Calu3 (cell line): ENCODE measurements at regions of chr14 and their contacts with region 1.

Region 1: DNA sequence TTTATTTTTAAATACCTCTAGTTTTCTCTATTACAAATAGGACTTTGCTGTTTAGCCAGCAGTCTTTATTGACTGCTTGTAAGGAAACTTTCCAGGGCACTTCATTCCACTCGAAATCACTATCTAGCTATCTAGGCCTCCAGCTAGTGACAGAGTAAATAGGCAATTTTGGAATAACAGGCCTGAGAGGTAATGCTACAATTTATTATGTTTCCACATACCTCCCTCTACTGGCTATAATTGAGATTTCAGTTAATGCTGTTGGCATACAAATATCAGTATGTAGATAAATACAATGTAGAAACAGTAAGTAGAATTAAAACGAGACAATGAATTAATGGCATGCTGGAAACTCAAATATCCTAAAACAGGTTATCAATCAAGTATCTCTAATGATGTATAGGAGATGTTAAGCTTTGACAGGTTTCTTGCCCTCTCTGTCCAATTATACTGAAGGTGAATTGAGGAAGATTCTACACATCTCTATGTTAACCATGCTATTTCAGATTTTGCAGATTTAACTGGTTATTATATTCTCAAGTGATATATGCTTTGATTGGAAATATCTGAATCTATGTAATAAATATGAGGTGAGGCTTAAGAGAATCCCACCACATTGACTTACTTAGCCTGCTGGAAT is 7.2 kb downstream of the DTD2 start:
- DNase-seq: no peak
- H3K4me3 Mint-ChIP-seq: no peak overlapping the region
- H3K27ac Mint-ChIP-seq: no peak overlapping the region
- H3K4me1 Mint-ChIP-seq: peaks cover 8% of the 10 kb centered on the region
- H3K27me3 Mint-ChIP-seq: no peaks in the 10 kb centered on the region
- CTCF ChIP-seq: peak; percentile 28

Region 2: GRCh38 chr14:31419967-31420318 is 30.1 kb before region 1 on chr14:
- CTCF ChIA-PET with region 1: interaction called, 5 read pairs
- intact Hi-C with region 1: loop called (anchors 2 kb)
- DNase-seq: peak; percentile 78
- H3K4me3 Mint-ChIP-seq: peak overlapping the region; percentile 100
- H3K27ac Mint-ChIP-seq: peak overlapping the region; percentile 98
- H3K4me1 Mint-ChIP-seq: peaks cover 22% of the 10 kb centered on the region
- H3K27me3 Mint-ChIP-seq: no peaks in the 10 kb centered on the region
- CTCF ChIP-seq: no peak

Region 3: GRCh38 chr14:31435276-31435675 is 14.8 kb before region 1 on chr14:
- CTCF ChIA-PET with region 1: no interaction called
- intact Hi-C with region 1: no loop called
- DNase-seq: no peak
- H3K4me3 Mint-ChIP-seq: no peak overlapping the region
- H3K27ac Mint-ChIP-seq: no peak overlapping the region
- H3K4me1 Mint-ChIP-seq: no peaks in the 10 kb centered on the region
- H3K27me3 Mint-ChIP-seq: no peaks in the 10 kb centered on the region
- CTCF ChIP-seq: no peak

Region 4: DNA sequence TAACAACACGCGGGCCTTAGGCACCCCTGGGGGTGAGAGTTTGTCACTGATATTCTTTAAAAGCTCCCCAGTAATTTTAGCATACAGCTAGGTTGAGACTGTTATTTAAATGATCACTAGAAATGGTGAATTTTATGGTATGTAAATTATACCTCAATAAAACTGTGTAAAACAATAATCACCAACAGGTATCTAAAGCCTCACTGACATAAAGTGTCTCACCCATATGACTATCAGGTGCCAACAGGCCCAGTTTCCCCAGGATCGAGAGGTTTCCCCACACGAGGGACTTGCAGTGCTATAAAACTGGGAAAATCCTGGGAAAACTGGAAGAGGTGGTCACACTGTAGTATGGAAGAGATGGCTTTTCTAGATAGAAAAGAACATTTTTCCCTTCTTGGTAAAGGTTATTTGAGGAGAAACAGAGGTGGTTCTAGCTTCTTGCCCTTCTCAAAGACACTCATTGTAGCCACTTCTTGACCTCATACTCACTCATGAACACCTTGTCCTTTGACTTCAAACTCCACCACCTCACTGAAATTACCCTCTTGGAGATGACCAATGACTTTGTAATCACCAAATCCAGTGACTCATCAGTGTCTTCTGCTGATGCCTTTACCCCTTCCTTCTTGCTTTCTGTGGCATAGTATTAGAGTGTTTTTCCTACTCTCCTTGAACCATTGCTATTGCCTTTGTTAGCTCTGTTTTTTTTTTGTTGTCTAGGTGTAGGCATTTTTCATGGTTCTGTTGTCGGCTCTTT is 86.3 kb after region 1 on chr14:
- CTCF ChIA-PET with region 1: no interaction called
- intact Hi-C with region 1: no loop called
- DNase-seq: no peak
- H3K4me3 Mint-ChIP-seq: no peak overlapping the region
- H3K27ac Mint-ChIP-seq: no peak overlapping the region
- H3K4me1 Mint-ChIP-seq: no peaks in the 10 kb centered on the region
- H3K27me3 Mint-ChIP-seq: peaks cover 12% of the 10 kb centered on the region
- CTCF ChIP-seq: no peak